OCI-LY7 (cell line): ENCODE measurements at regions of chr3 and their contacts with region 1.

Region 1: DNA sequence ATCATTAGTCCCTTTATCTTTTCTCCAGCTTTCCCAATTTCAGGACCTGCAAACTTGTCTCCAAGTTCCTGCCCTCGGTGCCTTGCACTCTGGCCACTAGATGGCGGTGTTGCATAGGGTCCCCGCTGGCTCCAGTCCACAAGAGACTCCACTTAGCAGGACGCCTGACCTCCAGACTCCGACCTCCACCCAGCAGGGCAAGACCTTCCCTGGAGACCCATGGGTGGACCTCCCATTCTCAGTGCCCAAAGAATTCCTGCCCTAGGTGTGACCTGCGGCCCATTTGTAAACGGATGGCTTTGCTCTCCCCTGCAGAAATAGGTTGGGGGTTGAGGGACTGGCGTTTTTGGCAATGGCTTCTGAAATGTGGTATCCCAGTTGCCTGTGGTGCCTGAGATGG is 82.6 kb downstream of the LSM3 start:
- DNase-seq: peak; percentile 80
- H3K4me3 ChIP-seq: no peak overlapping the region
- H3K27ac ChIP-seq: no peak overlapping the region
- H3K4me1 ChIP-seq: peaks cover 6% of the 10 kb centered on the region
- CTCF ChIP-seq: peak; percentile 100

Region 2: GRCh38 chr3:13895155-13896105 is 365.8 kb before region 1 on chr3:
- CTCF ChIA-PET with region 1: no interaction called
- POLR2A ChIA-PET with region 1: no interaction called
- intact Hi-C with region 1: loop called (anchors 2 kb)
- DNase-seq: peak; percentile 82
- H3K4me3 ChIP-seq: peak overlapping the region; percentile 62
- H3K27ac ChIP-seq: no peak overlapping the region
- H3K4me1 ChIP-seq: peaks cover 19% of the 10 kb centered on the region
- CTCF ChIP-seq: no peak

Region 3: GRCh38 chr3:14203521-14204079 is 57.6 kb before region 1 on chr3:
- CTCF ChIA-PET with region 1: interaction called, 6 read pairs
- POLR2A ChIA-PET with region 1: interaction called, 5 read pairs
- intact Hi-C with region 1: loop called (anchors 2 kb)
- DNase-seq: peak; percentile 70
- H3K4me3 ChIP-seq: no peak overlapping the region
- H3K27ac ChIP-seq: no peak overlapping the region
- H3K4me1 ChIP-seq: no peaks in the 10 kb centered on the region
- CTCF ChIP-seq: peak; percentile 91

Region 4: GRCh38 chr3:14391033-14391432 is 129.8 kb after region 1 on chr3:
- CTCF ChIA-PET with region 1: no interaction called
- POLR2A ChIA-PET with region 1: no interaction called
- intact Hi-C with region 1: loop called (anchors 5 kb)
- DNase-seq: no peak
- H3K4me3 ChIP-seq: no peak overlapping the region
- H3K27ac ChIP-seq: peak overlapping the region; percentile 97
- H3K4me1 ChIP-seq: peaks cover 81% of the 10 kb centered on the region
- CTCF ChIP-seq: no peak

Region 5: GRCh38 chr3:14467814-14468620 is 206.8 kb after region 1 on chr3:
- CTCF ChIA-PET with region 1: no interaction called
- POLR2A ChIA-PET with region 1: no interaction called
- intact Hi-C with region 1: loop called (anchors 1 kb)
- DNase-seq: peak; percentile 53
- H3K4me3 ChIP-seq: no peak overlapping the region
- H3K27ac ChIP-seq: no peak overlapping the region
- H3K4me1 ChIP-seq: no peaks in the 10 kb centered on the region
- CTCF ChIP-seq: peak; percentile 92

Region 6: GRCh38 chr3:14508961-14509795 is 247.9 kb after region 1 on chr3:
- CTCF ChIA-PET with region 1: interaction called, 4 read pairs
- POLR2A ChIA-PET with region 1: no interaction called
- intact Hi-C with region 1: loop called (anchors 1 kb)
- DNase-seq: peak; percentile 69
- H3K4me3 ChIP-seq: no peak overlapping the region
- H3K27ac ChIP-seq: no peak overlapping the region
- H3K4me1 ChIP-seq: no peaks in the 10 kb centered on the region
- CTCF ChIP-seq: peak; percentile 84

Region 7: GRCh38 chr3:14548321-14548729 is 287.1 kb after region 1 on chr3:
- CTCF ChIA-PET with region 1: no interaction called
- POLR2A ChIA-PET with region 1: no interaction called
- intact Hi-C with region 1: loop called (anchors 1 kb)
- DNase-seq: peak; percentile 61
- H3K4me3 ChIP-seq: no peak overlapping the region
- H3K27ac ChIP-seq: no peak overlapping the region
- H3K4me1 ChIP-seq: no peaks in the 10 kb centered on the region
- CTCF ChIP-seq: peak; percentile 80

Region 8: GRCh38 chr3:14943042-14943441 is 681.8 kb after region 1 on chr3:
- CTCF ChIA-PET with region 1: no interaction called
- POLR2A ChIA-PET with region 1: no interaction called
- intact Hi-C with region 1: no loop called
- DNase-seq: no peak
- H3K4me3 ChIP-seq: no peak overlapping the region
- H3K27ac ChIP-seq: no peak overlapping the region
- H3K4me1 ChIP-seq: peaks cover 9% of the 10 kb centered on the region
- CTCF ChIP-seq: no peak